Sciatic nerve (tissue), 2 donors: ENCODE measurements at regions of chr17 and their contacts with region 1.

Region 1: DNA sequence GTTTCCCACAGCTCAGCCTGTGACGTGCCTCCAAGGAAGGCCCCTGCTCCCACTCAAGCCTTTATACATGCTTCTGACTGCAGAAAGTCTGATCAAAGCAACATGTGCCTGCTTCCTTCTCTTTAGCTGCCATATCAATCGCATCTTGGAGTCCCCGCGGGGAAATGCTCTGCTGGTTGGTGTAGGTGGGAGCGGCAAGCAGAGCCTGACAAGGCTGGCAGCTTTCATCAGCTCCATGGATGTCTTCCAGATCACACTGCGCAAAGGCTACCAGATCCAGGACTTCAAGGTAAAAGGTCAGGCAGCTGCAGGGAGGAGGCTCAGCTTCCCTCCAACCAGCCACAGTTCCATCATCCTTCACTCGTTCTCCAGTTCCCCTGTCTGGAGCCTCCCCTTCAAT is 189.7 kb downstream of the ZNF18 start:
- DNase-seq: no peak
- ATAC-seq: no peak

Region 2: DNA sequence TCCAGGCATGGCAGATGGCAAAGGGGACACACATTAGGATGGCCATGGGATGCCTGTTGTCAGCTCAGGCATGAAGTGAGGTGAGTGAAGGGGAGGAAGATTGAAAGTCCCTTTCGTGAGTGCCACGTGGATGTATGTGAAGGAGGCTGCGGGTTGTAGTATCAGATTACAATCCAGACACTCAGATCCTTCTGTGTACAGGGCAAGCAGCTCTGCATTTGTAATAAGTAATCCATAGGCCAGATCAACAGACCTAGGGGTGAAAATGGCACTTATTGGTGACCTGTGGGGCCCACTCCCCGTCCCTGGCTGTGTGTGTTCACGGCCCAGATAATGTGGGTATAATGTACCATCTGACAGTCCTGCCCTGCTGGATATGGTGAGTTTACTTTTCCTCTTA is 49.8 kb before region 1 on chr17:
- intact Hi-C with region 1: loop called (anchors 5 kb)
- DNase-seq: no peak
- ATAC-seq: no peak

Region 3: DNA sequence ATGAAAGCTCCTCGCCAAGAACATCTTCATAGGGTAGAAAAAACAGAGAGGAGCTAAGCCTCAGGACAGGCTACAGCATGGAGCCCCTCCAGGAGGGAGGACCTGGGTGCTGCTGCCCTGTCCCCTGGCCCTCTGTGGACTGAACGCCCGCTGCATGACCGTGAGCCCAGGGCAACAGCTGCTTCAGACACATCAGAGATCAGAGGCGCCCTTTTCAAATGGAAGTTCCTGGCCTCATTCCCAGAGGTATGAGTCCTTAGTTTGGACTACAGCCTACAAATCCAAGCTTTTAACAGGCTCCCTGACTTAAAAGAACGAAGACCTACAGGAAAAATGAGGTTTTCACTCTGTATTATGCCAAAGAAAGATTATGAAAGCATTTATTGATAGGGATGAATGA is 141.2 kb after region 1 on chr17:
- intact Hi-C with region 1: no loop called
- DNase-seq: no peak
- ATAC-seq: peak; percentile 64